Activated CD4-positive, alpha-beta T cell treated with anti-CD3 and anti-CD28 coated beads, Interleukin-2, amount 10 ng/mL, durations not matched to agents 24 days and 14 days (primary cell): ENCODE measurements at regions of chr2 and their contacts with region 1.

Region 1: DNA sequence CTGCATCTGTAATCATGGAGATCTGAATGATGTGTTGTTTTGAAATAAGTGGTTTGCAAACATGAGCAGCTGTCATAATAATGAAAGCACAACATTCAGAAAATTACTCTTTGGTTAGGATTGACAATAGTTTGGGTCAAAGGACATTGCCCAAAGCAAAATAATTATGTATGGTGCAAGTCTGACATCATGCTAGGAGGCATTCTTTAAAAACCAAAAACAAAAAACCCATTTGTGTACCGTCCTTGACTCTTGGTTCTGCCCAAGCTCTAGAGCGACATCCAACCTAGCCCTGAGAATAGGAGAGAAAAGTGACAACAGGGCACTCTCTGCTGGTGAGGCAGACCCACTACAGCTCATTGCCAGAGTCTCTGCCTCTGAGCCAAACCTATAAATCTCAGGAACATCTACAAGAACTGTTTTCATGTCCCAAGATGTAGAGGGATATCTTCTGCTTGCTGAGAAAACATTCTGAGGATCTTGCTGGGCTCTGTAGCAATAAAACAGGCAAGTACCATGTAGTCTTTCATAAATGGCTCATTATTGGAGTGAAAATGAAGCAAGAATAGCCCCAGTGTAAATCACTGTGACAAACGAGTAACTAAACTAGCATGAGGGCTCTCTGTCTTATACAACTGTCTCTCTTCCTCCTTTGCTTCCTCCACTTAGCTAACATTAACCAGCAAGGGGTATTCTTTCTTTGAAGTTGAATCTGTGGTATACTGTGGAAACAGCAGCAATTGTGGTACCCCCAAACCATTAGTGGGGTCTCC is 266.8 kb upstream of the CXCR4 start:
- DNase-seq: peak; percentile 87
- H3K4me3 Mint-ChIP-seq: peak overlapping the region; percentile 27
- H3K27ac Mint-ChIP-seq: peak overlapping the region; percentile 93
- H3K4me1 Mint-ChIP-seq: peaks cover 44% of the 10 kb centered on the region
- H3K27me3 Mint-ChIP-seq: no peaks in the 10 kb centered on the region

Region 2: DNA sequence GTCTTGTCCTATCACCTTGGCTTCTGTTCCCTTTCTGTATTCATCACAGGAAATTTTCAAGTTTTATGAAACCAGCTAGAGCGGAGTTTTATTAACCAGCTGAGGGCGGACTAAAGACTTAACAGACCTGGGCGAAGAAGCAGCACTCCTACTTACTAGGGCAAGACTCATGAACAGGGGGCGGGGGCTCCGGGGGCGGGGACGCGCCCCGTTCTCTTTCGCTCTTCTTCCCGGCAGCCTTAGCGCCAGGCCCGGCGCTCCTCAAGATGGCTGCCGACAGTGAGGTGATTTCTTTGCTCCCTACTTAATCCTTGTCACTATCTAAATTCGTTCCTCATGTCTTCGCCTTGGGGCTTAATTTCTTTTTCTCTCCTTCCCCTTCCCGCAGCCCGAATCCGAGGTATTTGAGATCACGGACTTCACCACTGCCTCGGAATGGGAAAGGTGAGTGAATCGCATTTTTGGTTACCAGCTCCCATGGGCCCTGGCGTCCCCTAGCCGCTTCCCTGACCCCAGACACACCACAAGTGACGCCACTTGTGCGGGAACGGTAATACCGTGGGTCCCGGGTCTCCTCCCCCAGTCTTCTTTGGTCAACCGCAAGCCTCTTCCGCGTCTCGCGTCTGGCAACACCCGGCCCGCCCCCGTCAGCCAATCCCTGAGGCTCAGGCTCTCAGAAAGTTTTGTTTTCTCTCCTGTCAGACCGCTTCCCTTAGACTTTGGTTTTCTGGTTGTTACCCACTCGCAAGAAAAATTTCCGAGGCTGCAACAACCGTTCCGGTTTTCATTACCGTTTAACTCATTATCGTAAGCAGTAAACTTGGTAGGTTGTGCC is 1332.5 kb before region 1 on chr2 and contains the start of gene RAB3GAP1:
- intact Hi-C with region 1: loop called (anchors 2 kb)
- DNase-seq: peak; percentile 98
- H3K4me3 Mint-ChIP-seq: peak within 1 kb of the TSS; percentile 94
- H3K27ac Mint-ChIP-seq: peak within 1 kb of the TSS; percentile 100
- H3K4me1 Mint-ChIP-seq: peaks cover 38% of the 10 kb centered on the region
- H3K27me3 Mint-ChIP-seq: peaks cover 2% of the 10 kb centered on the region
- total RNA-seq, gene RAB3GAP1: 24.2 and 26.3 TPM in 2 replicates

Region 3: GRCh38 chr2:135820003-135820618 is 564.6 kb before region 1 on chr2:
- intact Hi-C with region 1: loop called (anchors 1 kb)
- DNase-seq: peak; percentile 93
- H3K4me3 Mint-ChIP-seq: peak overlapping the region; percentile 74
- H3K27ac Mint-ChIP-seq: peak overlapping the region; percentile 83
- H3K4me1 Mint-ChIP-seq: peaks cover 44% of the 10 kb centered on the region
- H3K27me3 Mint-ChIP-seq: no peaks in the 10 kb centered on the region

Region 4: DNA sequence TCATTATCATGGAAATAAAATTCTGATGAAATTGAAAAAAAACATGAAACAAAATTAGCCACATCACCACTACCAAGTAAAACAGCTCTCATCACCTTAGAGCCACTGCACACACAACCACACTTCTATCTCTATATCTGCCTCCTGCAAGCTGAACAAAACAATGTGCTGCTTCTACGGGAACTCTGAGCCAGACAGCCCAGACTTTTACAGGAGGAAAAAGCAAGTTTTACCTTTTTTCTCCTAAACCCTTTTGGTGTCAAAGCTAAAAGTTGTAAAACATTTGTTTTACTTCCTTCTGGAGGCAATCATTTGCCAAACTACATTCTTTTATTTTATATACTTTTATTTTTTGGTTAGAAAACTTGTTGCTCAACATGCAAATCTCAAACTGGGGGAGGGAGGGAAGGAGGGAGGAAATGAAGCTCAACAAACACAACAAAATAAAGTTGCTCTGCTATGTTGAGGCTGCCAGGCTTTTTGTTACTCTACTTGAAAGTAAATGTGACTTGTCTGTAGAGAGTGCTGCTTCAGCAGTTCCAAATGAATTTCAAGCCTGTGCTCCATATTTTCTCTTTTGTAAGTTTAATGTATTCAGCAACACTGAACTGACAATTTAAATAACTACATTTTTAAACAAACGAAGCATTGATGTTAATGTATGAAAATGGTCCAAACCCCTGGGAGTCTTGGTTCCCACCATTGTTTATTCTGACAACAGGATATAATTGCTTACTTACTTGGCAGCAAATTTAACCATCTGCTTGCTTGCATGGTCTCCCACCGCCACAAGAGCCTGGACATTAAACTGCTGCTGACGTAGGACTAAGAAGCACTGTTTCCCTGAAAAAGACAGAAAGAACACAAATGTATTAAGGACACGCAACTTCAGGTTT is 423.8 kb before region 1 on chr2:
- intact Hi-C with region 1: loop called (anchors 1 kb)
- DNase-seq: peak; percentile 83
- H3K4me3 Mint-ChIP-seq: peak overlapping the region; percentile 58
- H3K27ac Mint-ChIP-seq: peak overlapping the region; percentile 94
- H3K4me1 Mint-ChIP-seq: peaks cover 56% of the 10 kb centered on the region
- H3K27me3 Mint-ChIP-seq: no peaks in the 10 kb centered on the region

Region 5: GRCh38 chr2:136131961-136132824 is 252.5 kb before region 1 on chr2:
- intact Hi-C with region 1: loop called (anchors 1 kb)
- DNase-seq: peak; percentile 91
- H3K4me3 Mint-ChIP-seq: peak overlapping the region; percentile 76
- H3K27ac Mint-ChIP-seq: peak overlapping the region; percentile 81
- H3K4me1 Mint-ChIP-seq: peaks cover 88% of the 10 kb centered on the region
- H3K27me3 Mint-ChIP-seq: peaks cover 23% of the 10 kb centered on the region

Region 6: GRCh38 chr2:136327162-136327852 is 57.4 kb before region 1 on chr2:
- intact Hi-C with region 1: loop called (anchors 1 kb)
- DNase-seq: peak; percentile 91
- H3K4me3 Mint-ChIP-seq: peak overlapping the region; percentile 74
- H3K27ac Mint-ChIP-seq: peak overlapping the region; percentile 92
- H3K4me1 Mint-ChIP-seq: peaks cover 49% of the 10 kb centered on the region
- H3K27me3 Mint-ChIP-seq: no peaks in the 10 kb centered on the region

Region 7: DNA sequence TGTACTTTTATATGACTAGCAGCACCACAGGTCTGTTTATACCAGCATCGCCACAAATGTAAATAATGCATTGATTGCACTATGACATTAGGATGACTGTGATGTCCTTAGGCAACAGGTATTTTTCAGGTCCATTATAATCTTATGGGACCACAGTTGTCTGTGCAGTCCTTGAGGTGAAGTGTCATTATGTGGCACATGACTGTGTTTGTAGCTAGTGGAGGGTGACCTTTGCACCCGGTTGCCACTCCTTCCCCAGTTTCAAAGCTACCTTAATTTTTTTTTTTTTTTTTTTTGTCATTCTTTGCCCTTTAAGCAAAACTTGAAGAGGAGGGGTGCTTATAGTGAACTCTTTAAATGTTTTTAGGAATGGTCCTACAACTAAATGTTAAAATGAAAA is 767.0 kb after region 1 on chr2:
- intact Hi-C with region 1: no loop called
- DNase-seq: no peak
- H3K4me3 Mint-ChIP-seq: no peak overlapping the region
- H3K27ac Mint-ChIP-seq: no peak overlapping the region
- H3K4me1 Mint-ChIP-seq: no peaks in the 10 kb centered on the region
- H3K27me3 Mint-ChIP-seq: no peaks in the 10 kb centered on the region